Activated CD4-positive, alpha-beta T cell treated with anti-CD3 and anti-CD28 coated beads, Interleukin-2, amount 10 ng/mL, durations not matched to agents 24 days and 14 days (primary cell): ENCODE measurements at regions of chr16 and their contacts with region 1.

Region 1: DNA sequence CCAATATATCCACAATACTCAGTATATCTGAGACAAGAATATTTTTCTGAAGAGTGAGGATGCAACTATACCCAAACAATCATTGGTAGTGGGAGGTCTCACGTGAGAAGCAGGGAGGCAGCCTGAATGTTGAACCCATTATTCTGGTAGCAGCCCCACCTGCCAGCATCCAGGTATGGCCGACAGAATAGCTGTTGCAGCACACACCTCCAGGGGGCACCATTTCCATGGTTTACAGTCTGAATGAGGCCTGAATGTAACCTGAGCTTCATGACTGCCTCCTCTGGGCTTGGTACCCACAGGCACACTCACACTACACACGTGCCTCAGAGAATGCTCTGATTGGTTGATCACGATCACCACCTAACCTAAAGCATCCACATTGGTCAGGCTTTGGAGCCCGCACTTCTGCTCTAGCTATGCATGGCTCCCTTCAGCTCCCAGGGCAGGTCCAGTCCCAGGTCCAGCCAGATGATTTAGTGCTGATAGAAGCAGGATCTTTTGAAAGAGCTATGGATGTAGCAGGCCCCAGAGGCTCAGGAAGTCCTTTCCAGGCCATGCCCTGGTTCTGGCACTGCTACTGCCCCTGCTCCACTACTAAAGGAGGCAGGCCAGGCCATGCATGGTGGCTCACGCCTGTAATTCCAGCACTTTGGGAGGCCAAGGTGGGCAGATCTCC is 11.0 kb upstream of the CBFB start:
- DNase-seq: peak; percentile 97
- H3K4me3 Mint-ChIP-seq: no peak overlapping the region
- H3K27ac Mint-ChIP-seq: no peak overlapping the region
- H3K4me1 Mint-ChIP-seq: peaks cover 38% of the 10 kb centered on the region
- H3K27me3 Mint-ChIP-seq: no peaks in the 10 kb centered on the region

Region 2: GRCh38 chr16:66954097-66954659 is 63.8 kb before region 1 on chr16:
- intact Hi-C with region 1: loop called (anchors 2 kb)
- DNase-seq: peak; percentile 95
- H3K4me3 Mint-ChIP-seq: no peak overlapping the region
- H3K27ac Mint-ChIP-seq: no peak overlapping the region
- H3K4me1 Mint-ChIP-seq: peaks cover 24% of the 10 kb centered on the region
- H3K27me3 Mint-ChIP-seq: peaks cover 28% of the 10 kb centered on the region

Region 3: GRCh38 chr16:66968847-66969246 is 49.1 kb before region 1 on chr16:
- intact Hi-C with region 1: no loop called
- DNase-seq: no peak
- H3K4me3 Mint-ChIP-seq: no peak overlapping the region
- H3K27ac Mint-ChIP-seq: no peak overlapping the region
- H3K4me1 Mint-ChIP-seq: peaks cover 5% of the 10 kb centered on the region
- H3K27me3 Mint-ChIP-seq: no peaks in the 10 kb centered on the region

Region 4: DNA sequence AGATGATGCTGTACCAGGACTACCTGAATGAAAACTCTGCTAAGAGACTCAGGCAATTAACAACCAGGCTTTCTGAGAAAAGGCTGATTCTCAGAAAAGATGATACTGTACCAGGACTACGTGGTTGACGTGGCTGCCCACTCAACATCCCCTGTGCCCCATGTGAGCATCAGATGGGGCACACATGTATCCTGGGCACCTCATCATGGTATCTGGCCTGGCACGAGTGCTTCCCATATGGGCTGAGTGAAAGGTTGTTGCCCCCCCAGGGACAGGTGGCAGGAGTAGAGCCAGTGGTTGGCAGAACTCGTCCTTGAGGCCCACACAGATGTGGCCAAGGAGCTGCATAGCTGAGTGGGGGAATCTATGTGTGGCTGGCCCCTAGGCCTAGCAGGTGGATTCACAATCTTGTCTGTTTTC is 33.0 kb before region 1 on chr16:
- intact Hi-C with region 1: loop called (anchors 1 kb)
- DNase-seq: peak; percentile 86
- H3K4me3 Mint-ChIP-seq: peak overlapping the region; percentile 61
- H3K27ac Mint-ChIP-seq: peak overlapping the region; percentile 97
- H3K4me1 Mint-ChIP-seq: peaks cover 57% of the 10 kb centered on the region
- H3K27me3 Mint-ChIP-seq: no peaks in the 10 kb centered on the region

Region 5: GRCh38 chr16:67055712-67056487 is 38.0 kb after region 1 on chr16:
- intact Hi-C with region 1: loop called (anchors 1 kb)
- DNase-seq: peak; percentile 67
- H3K4me3 Mint-ChIP-seq: peak overlapping the region; percentile 78
- H3K27ac Mint-ChIP-seq: peak overlapping the region; percentile 98
- H3K4me1 Mint-ChIP-seq: peaks cover 56% of the 10 kb centered on the region
- H3K27me3 Mint-ChIP-seq: no peaks in the 10 kb centered on the region

Region 6: DNA sequence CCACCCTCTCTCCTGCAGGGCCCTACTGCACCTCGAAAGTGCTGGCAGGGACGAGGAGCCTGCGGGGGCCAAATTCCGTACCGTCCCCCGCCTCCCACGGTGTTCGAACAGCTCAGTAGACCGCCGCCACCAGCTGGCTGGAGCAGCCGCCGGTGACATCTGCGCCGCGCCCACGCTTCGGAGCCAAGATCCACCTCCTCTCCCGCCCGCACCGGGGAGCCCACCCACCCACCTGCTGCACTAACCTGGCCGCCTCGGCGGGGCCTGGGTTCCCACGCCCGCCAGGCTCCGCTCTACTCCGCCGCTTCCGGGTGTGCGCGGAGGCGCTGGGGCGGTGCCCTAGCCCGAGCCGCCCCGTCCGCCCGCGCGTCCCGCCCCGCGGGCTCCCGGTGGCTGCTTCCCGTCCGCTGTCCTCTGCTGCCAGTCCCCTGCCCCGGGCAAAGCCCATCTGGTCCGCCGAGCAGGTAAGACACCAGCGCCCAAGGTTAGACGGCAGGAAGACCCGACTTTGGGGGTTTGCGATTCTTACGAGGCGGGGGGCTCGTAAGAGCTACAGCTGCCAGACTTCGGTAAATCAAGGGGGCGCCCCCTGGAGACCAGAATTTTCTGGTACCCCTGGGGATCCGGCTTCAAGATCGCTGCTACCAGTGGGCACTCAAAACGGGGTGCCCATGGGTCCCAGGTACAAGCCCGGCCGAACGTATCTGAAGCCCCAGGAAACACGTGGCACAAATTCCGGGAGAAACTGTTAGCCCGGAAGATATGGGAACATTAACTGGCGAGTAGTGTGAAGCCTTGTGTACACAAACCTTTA is 141.9 kb after region 1 on chr16 and contains the starts of genes FBXL8 and TRADD:
- intact Hi-C with region 1: loop called (anchors 1 kb)
- DNase-seq: peak; percentile 96
- H3K4me3 Mint-ChIP-seq: peak within 1 kb of the TSS; percentile 92
- H3K27ac Mint-ChIP-seq: peak within 1 kb of the TSS; percentile 97
- H3K4me1 Mint-ChIP-seq: peaks cover 52% of the 10 kb centered on the region
- H3K27me3 Mint-ChIP-seq: no peaks in the 10 kb centered on the region
- total RNA-seq, gene FBXL8: 25.1 and 30.0 TPM in 2 replicates
- total RNA-seq, gene TRADD: 28.9 and 30.1 TPM in 2 replicates